Calu3 (cell line): ENCODE measurements at regions of chr9 and their contacts with region 1.

Region 1: DNA sequence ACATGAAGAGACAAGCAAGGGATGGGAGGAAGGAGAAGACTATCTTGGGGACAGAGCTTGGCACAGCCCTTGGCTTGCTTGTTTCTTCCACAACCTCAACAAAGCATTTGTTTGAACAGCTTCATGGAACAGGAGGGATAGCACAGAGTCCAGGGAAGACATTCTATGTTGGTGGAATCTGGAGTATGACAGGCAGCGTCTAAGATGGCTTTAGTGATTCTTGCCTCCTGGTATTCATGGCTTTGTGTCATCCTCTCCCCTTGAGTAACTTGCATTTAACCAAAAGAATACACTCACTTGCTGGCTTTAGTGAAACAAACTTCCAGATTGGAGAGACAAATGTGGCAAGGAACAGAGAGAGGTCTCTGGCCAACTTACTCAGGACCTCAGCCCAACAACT is 30.8 kb upstream of the RECK start:
- DNase-seq: no peak
- H3K4me3 Mint-ChIP-seq: no peak overlapping the region
- H3K27ac Mint-ChIP-seq: no peak overlapping the region
- H3K4me1 Mint-ChIP-seq: no peaks in the 10 kb centered on the region
- H3K27me3 Mint-ChIP-seq: peaks cover 74% of the 10 kb centered on the region
- CTCF ChIP-seq: no peak

Region 2: GRCh38 chr9:35611230-35611797 is 394.6 kb before region 1 on chr9:
- CTCF ChIA-PET with region 1: no interaction called
- intact Hi-C with region 1: no loop called
- DNase-seq: peak; percentile 24
- H3K4me3 Mint-ChIP-seq: no peak overlapping the region
- H3K27ac Mint-ChIP-seq: no peak overlapping the region
- H3K4me1 Mint-ChIP-seq: no peaks in the 10 kb centered on the region
- H3K27me3 Mint-ChIP-seq: peaks cover 36% of the 10 kb centered on the region
- CTCF ChIP-seq: peak; percentile 41

Region 3: GRCh38 chr9:36053971-36054370 is 48.1 kb after region 1 on chr9:
- CTCF ChIA-PET with region 1: interaction called, 10 read pairs
- intact Hi-C with region 1: no loop called
- DNase-seq: no peak
- H3K4me3 Mint-ChIP-seq: no peak overlapping the region
- H3K27ac Mint-ChIP-seq: no peak overlapping the region
- H3K4me1 Mint-ChIP-seq: no peaks in the 10 kb centered on the region
- H3K27me3 Mint-ChIP-seq: no peaks in the 10 kb centered on the region
- CTCF ChIP-seq: no peak

Region 4: GRCh38 chr9:36276781-36277181 is 270.9 kb after region 1 on chr9:
- CTCF ChIA-PET with region 1: no interaction called
- intact Hi-C with region 1: no loop called
- DNase-seq: peak; percentile 28
- H3K4me3 Mint-ChIP-seq: peak overlapping the region; percentile 72
- H3K27ac Mint-ChIP-seq: peak overlapping the region; percentile 76
- H3K4me1 Mint-ChIP-seq: peaks cover 15% of the 10 kb centered on the region
- H3K27me3 Mint-ChIP-seq: no peaks in the 10 kb centered on the region
- CTCF ChIP-seq: no peak